ENCODE measurements at regions of chr7 and their contacts with region 1.

Region 1: DNA sequence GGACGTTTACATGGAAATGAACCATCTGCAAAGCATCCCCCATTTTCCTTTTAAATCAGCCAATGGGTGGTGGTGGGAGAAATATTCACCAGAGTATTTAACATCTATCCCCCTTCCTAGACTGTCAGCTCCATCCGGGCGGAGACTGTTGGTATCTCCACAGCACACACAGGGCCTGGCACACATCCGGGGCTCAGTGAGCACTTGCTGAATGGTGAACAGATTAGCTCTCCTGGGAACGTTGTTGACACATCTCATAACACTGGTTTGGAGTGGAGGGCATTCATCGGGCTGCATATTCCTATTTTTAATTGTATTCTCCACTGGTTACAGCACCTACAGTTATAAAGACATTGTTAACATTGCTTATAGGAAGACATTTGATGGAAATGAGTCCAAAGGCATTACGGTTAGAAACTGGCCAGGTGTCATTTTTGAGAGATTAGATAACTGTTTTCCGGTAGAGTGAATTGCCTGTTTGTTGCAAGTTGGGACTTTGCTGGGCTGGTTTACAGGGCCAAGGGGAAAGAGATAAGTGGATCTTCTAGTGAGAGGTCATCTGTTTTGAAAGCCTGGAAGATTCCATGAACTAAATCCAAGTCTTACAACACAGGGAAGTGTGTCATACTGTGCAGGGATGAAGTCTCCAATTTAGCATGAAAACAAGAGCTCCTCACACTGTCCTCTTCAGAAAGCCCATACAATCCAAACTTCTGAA is 101.8 kb downstream of the EGFR start:
- DNase-seq: peak; percentile 87
- H3K4me3 ChIP-seq: no peak overlapping the region
- H3K27ac ChIP-seq: peak overlapping the region; percentile 81
- H3K4me1 ChIP-seq: peaks cover 56% of the 10 kb centered on the region
- H3K27me3 ChIP-seq: no peaks in the 10 kb centered on the region
- CTCF ChIP-seq: no peak

Region 2: DNA sequence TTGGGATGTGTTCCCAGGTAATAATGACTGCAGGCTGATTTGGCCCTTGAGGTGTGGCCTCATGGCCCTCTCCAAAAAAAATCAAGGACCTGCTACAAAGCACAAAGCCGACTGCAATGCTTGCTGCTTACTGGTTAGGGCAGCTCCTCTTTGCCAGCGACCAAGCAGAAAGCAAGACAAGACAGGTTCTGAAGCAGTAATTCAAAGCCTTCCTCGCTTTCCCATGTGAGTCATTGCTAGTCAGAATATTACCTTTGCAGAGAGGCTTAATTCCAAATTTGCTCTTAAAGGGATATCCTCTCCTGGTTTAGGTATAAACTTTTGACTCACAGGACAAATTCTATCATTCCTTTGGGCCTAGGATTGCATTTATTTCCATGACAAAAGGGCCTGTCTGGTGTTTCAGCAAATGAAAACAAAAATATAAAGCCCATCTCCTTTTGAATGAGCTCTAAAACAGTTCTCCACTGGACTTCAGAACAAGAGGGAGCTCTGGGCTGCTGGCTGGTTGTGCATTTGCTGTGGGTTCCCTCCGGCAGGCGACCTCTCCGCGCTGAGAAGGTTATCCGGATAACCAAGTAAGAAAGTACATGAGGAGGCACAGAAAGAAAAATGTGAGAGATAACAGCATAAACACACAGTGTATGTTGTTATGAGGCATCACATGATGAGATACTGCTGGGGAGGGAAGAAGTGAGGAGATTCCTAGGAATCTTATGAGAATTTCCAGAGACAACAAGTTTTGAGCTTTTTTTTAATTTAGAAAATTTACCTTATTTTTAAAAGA is 11.1 kb before region 1 on chr7:
- CTCF ChIA-PET with region 1: no interaction called
- dilution Hi-C with region 1: no loop called
- in situ Hi-C with region 1: no loop called
- intact Hi-C with region 1: loop called (anchors 1 kb)
- DNase-seq: peak; percentile 96
- H3K4me3 ChIP-seq: peak overlapping the region; percentile 4 to 35 (median 8)
- H3K27ac ChIP-seq: peak overlapping the region; percentile 91
- H3K4me1 ChIP-seq: peaks cover 96% of the 10 kb centered on the region
- H3K27me3 ChIP-seq: no peaks in the 10 kb centered on the region
- CTCF ChIP-seq: no peak

Measured in mammary epithelial cell (primary cell).